Activated T-helper 2 cell treated with anti-CD3 and anti-CD28 coated beads, Interferon-gamma antibody, Interleukin-2, Interleukin-4, amounts not matched to agents 10 μg/mL and 5 μg/mL and 100 μg/mL, durations not matched to agents 14 hours and 24 hours and 36 hours (primary cell): ENCODE measurements at regions of chrX and their contacts with region 1.

Region 1: DNA sequence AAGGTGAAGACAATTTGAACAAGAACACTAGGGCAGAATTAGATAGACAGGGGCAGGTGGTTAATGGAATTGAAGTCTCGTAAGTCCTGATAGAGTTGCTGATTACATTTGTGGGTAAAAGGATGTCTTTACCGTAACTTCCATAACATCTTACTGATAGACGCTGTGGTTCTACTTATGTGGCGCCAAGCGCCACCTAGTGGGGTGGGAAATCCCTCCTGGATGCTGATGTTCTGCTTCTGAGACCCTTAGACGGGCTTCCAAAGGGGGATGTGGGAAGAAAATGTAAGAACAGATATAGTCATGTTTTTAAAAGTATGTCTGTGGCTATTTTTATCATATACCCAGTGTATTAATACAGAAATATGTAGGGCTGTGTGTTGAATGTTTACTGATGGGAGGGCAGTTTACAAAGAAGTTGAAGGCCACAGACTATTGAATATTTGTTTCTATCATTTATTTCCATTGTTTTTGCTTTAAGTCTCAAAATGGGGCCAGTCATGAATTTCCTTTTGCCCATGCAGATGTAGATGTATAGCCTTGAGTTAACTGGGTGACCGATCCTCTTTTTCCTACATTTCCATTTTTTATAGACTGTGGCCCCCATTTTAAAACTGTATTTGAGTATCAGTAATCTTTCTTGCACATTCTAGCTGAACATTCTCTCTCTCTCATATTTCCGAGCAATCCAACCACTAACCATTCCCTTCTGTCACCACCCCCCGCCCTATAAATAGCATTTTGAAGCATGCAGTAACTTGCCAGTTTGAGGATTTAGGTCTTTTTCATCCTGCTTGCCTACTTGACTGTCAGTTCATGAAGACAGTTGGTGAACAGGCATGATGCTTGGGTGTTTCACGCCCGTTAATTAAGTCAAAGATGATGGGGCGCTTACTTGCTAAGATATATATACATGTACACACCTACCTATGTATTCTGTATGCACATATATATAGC is 12.1 kb upstream of the TLR8 start:
- DNase-seq: peak; percentile 20
- H3K4me3 Mint-ChIP-seq: no peak overlapping the region
- H3K27ac Mint-ChIP-seq: no peak overlapping the region
- H3K4me1 Mint-ChIP-seq: peaks cover 43% of the 10 kb centered on the region
- H3K27me3 Mint-ChIP-seq: no peaks in the 10 kb centered on the region

Region 2: GRCh38 chrX:12814420-12814819 is 79.9 kb before region 1 on chrX:
- intact Hi-C with region 1: loop called (anchors 1 kb)
- DNase-seq: peak; percentile 24
- H3K4me3 Mint-ChIP-seq: no peak overlapping the region
- H3K27ac Mint-ChIP-seq: no peak overlapping the region
- H3K4me1 Mint-ChIP-seq: peaks cover 18% of the 10 kb centered on the region
- H3K27me3 Mint-ChIP-seq: no peaks in the 10 kb centered on the region

Region 3: DNA sequence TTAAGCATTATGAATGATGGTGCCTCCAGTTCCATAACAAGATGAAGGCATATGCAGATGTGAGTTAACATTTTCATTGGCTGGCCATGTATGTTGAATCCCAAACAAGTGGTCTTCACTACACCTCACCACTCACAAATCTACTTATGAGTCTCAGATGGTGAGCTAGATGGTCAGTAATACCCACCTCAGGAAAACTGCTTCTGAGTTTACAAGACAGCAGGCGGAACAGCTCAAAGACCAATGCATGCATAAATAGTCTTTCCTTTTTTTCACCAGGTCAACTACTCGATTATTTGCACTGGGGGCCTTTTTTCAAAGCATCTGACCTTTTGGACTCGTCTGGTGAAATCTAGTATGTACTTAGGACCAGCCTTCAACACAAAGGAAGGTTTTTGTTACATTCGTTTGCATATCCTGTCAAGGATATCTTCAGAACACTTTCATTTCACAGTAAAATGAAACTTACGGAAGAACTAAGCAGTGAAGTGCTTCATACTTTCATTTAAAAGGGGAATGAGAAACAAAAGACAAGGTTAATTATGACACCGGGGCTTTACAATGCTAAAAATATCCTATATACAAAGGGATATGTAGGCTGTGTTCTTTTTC is 50.6 kb before region 1 on chrX:
- intact Hi-C with region 1: loop called (anchors 2 kb)
- DNase-seq: no peak
- H3K4me3 Mint-ChIP-seq: peak overlapping the region; percentile 75
- H3K27ac Mint-ChIP-seq: peak overlapping the region; percentile 87
- H3K4me1 Mint-ChIP-seq: peaks cover 14% of the 10 kb centered on the region
- H3K27me3 Mint-ChIP-seq: no peaks in the 10 kb centered on the region

Region 4: GRCh38 chrX:12881914-12882313 is 12.4 kb before region 1 on chrX:
- intact Hi-C with region 1: no loop called
- DNase-seq: no peak
- H3K4me3 Mint-ChIP-seq: no peak overlapping the region
- H3K27ac Mint-ChIP-seq: no peak overlapping the region
- H3K4me1 Mint-ChIP-seq: no peaks in the 10 kb centered on the region
- H3K27me3 Mint-ChIP-seq: peaks cover 12% of the 10 kb centered on the region